Breast epithelium (tissue), 4 donors: ENCODE measurements at regions of chr6 and their contacts with region 1.

Region 1: GRCh38 chr6:152034631-152035030 is 227.1 kb downstream of the ESR1 start:
- DNase-seq: no peak
- H3K4me3 ChIP-seq: no peak overlapping the region
- H3K27ac ChIP-seq: no peak overlapping the region
- H3K4me1 ChIP-seq: no peaks in the 10 kb centered on the region
- H3K27me3 ChIP-seq: no peaks in the 10 kb centered on the region
- CTCF ChIP-seq: no peak
- POLR2A ChIP-seq: no peak

Region 2: GRCh38 chr6:151576633-151577032 is 458.0 kb before region 1 on chr6:
- intact Hi-C with region 1: loop called (anchors 10 kb)
- DNase-seq: no peak
- H3K4me3 ChIP-seq: no peak overlapping the region
- H3K27ac ChIP-seq: no peak overlapping the region
- H3K4me1 ChIP-seq: no peaks in the 10 kb centered on the region
- H3K27me3 ChIP-seq: no peaks in the 10 kb centered on the region
- CTCF ChIP-seq: no peak
- POLR2A ChIP-seq: no peak

Region 3: DNA sequence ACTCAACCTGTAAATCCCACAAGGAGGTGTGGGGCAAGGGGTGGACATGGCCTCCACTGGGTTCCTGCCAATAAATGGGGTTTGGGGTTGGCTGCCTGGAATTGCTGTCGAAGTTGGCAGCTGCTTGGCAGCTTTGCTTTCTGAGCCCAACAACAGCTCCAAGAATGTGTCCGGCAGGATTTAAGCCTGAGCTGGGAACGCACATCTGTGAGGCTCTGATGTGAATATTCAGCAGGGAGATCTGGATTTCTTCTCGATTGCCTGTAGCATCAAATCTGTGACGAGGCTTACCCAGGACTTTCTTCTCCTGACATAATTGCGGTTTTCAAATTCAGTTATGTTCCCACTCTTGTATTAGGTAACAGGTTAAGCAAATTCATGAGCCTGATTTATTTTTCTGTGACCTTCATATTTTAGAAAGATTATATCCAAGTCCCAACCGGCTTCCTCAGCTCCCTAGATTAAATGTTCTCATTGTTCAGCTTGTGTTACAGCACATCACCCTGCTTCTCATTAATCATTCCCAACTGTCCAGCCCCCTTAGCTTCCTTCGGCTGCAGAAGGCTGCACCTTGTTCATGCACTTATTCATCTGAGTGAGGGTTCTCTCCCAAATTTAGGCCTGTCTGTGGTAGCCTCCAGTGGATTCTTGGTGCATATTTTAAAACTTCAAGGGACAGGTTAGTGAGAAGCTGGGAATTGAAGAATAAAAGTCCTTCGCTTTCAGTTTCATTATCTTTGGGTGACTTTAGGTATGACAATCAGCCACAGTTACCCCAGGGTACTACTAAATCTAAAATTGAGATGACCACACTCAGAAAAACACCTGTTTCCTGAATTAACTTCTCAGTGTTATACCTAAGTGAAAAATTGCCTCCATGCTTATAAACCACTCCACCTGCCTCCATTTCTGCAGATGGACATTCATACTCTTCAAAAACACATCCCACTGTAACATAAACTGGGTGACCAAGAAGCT is 82.8 kb after region 1 on chr6:
- intact Hi-C with region 1: no loop called
- DNase-seq: no peak
- H3K4me3 ChIP-seq: no peak overlapping the region
- H3K27ac ChIP-seq: peak overlapping the region; percentile 76 to 82
- H3K4me1 ChIP-seq: peaks cover 0 to 9% of the 10 kb centered on the region in 2 donors
- H3K27me3 ChIP-seq: no peaks in the 10 kb centered on the region
- CTCF ChIP-seq: no peak
- POLR2A ChIP-seq: no peak

Region 4: GRCh38 chr6:152290693-152291092 is 256.1 kb after region 1 on chr6:
- intact Hi-C with region 1: no loop called
- DNase-seq: no peak
- H3K4me3 ChIP-seq: no peak overlapping the region
- H3K27ac ChIP-seq: no peak overlapping the region
- H3K4me1 ChIP-seq: no peaks in the 10 kb centered on the region
- H3K27me3 ChIP-seq: no peaks in the 10 kb centered on the region
- CTCF ChIP-seq: no peak
- POLR2A ChIP-seq: no peak